ENCODE measurements at regions of chr6 and their contacts with region 1.

Region 1: DNA sequence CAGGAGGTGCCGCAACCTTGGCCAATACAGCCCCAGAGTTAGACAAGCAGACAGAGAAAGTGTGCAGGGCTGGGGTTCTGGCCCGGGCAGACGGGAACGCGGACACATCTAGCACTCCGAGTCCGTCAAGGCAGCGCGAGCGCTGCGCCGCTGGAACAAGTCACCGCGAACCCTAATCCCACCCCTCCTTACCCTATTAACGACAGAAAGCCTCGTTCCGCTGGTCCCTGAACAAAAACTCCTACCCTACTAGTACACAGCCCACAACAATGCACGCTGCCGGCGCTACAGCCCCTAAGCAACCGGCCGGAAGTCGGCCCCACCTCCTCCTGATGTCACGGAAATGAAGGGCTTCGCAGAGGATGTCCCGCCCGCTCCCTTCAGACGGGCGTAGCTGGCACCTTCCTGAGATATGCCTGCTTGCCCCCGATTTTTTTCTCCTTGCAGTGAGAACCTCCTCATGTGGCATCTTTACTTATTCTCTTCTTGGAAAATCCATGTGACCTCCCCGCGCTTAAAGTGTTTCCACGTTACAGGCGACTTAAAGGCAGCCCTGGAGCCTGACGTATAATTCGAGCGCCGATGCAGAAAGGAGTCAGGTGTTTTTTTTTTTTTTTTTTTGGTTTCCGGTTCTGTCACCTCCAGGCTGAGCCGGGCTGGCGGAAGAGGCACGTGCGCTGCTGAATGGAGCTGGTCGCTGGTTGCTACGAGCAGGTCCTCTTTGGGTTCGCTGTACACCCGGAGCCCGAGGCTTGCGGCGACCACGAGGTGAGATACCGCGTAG is at the starts of genes C6orf52 and PAK1IP1:
- DNase-seq: peak; percentile 96 to 97
- ATAC-seq: peak; percentile 99
- H3K4me3 ChIP-seq: peak within 1 kb of the TSS; percentile 77 to 95
- H3K27ac ChIP-seq: peak within 1 kb of the TSS; percentile 72 to 86
- H3K4me1 ChIP-seq: no peaks in the 10 kb centered on the region
- H3K27me3 ChIP-seq: no peaks in the 10 kb centered on the region
- total RNA-seq, gene C6orf52: 0.66 TPM in 1 of 2 donors, not detected in the other
- total RNA-seq, gene PAK1IP1: 9.2 to 9.9 TPM

Region 2: GRCh38 chr6:10510592-10511367 is 183.7 kb before region 1 on chr6:
- intact Hi-C with region 1: loop called (anchors 1 to 10 kb)
- DNase-seq: peak; percentile 76 to 81
- ATAC-seq: peak; percentile 87
- H3K4me3 ChIP-seq: peak overlapping the region in 1 of 2 donors; percentile 26
- H3K27ac ChIP-seq: peak overlapping the region; percentile 68 to 82
- H3K4me1 ChIP-seq: peaks cover 0 to 2% of the 10 kb centered on the region in 2 donors
- H3K27me3 ChIP-seq: no peaks in the 10 kb centered on the region

Region 3: GRCh38 chr6:10633216-10633615 is 61.3 kb before region 1 on chr6:
- intact Hi-C with region 1: no loop called
- DNase-seq: no peak
- ATAC-seq: no peak
- H3K4me3 ChIP-seq: no peak overlapping the region
- H3K27ac ChIP-seq: no peak overlapping the region
- H3K4me1 ChIP-seq: no peaks in the 10 kb centered on the region
- H3K27me3 ChIP-seq: no peaks in the 10 kb centered on the region

Region 4: GRCh38 chr6:10722820-10723566 is 28.5 kb after region 1 on chr6 and contains the start of gene TMEM14C:
- intact Hi-C with region 1: loop called in 1 of 2 experiments (anchors 2 kb)
- DNase-seq: peak; percentile 99 to 100
- ATAC-seq: peak; percentile 99
- H3K4me3 ChIP-seq: peak within 1 kb of the TSS; percentile 68 to 78
- H3K27ac ChIP-seq: peak within 1 kb of the TSS; percentile 9 to 85
- H3K4me1 ChIP-seq: peaks cover 3 to 5% of the 10 kb centered on the region in 2 donors
- H3K27me3 ChIP-seq: no peaks in the 10 kb centered on the region
- total RNA-seq, gene TMEM14C: 72.8 to 85.3 TPM

Region 5: GRCh38 chr6:10771371-10771894 is 76.9 kb after region 1 on chr6:
- intact Hi-C with region 1: no loop called
- DNase-seq: no peak
- ATAC-seq: no peak
- H3K4me3 ChIP-seq: no peak overlapping the region
- H3K27ac ChIP-seq: no peak overlapping the region
- H3K4me1 ChIP-seq: no peaks in the 10 kb centered on the region
- H3K27me3 ChIP-seq: no peaks in the 10 kb centered on the region

Measured in aorta (tissue), 5 donors.